CD8-positive, alpha-beta T cell (primary cell): ENCODE measurements at regions of chr4 and their contacts with region 1.

Region 1: DNA sequence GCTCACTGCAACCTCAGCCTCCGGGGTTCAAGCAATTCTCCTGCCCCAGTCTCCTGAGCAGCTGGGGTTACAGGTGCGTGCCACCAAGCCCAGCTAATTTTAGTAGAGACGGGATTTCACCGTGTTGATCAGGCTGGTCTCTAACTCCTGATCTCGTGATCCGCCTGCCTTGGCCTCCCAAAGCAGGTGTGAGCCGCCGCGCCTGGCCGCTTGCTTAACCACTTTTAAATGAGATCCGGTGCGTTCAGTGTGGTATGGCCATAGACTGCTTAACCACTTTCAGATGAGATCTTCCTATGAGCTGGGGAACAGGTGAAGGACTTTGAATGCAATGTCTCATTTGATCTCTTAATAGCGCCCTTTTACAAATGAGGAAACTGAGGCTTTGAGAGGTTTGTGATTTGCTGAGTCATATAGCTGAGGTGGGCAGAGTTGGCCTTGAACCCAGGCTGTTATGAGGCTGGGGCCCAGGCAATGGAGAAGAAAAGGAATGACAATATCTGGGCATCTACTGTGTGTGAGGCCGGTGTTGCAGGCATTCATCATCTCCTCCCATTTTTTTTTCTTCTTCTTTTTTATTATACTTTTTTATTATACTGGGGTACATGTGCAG is 41.9 kb upstream of the NSG1 start:
- DNase-seq: peak in 1 of 9 experiments; percentile 11
- ATAC-seq: no peak
- H3K4me3 ChIP-seq: no peak overlapping the region
- H3K4me3 Mint-ChIP-seq: no peak overlapping the region
- H3K27ac ChIP-seq: no peak overlapping the region
- H3K27ac Mint-ChIP-seq: no peak overlapping the region
- H3K4me1 ChIP-seq: peaks cover 38% of the 10 kb centered on the region
- H3K4me1 Mint-ChIP-seq: peaks cover 61% of the 10 kb centered on the region
- H3K27me3 ChIP-seq: no peaks in the 10 kb centered on the region
- H3K27me3 Mint-ChIP-seq: no peaks in the 10 kb centered on the region
- CTCF ChIP-seq: no peak

Region 2: DNA sequence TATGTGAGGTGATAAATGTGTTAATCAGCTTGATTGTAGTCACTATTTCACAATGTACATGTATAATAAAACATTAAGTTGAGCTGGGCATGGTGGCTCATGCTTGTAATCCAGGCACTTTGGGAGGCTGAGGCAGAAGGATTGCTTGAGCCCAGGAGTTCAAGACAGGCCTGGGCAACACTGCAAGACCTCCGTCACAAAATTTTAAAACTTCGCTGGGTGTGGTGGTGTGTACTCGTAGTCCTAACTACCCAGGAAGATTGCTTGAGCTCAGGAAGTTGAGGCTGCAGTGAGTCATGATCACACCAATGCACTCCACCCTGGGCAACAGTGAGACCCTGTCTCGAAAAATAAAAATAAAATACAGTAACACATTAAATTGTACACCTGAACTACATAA is 75.2 kb before region 1 on chr4:
- CTCF ChIA-PET with region 1: interaction called, 3 read pairs
- POLR2A ChIA-PET with region 1: interaction called, 10 read pairs
- intact Hi-C with region 1: no loop called
- DNase-seq: peak in 6 of 9 experiments; percentile 39 to 81 (median 70)
- ATAC-seq: peak; percentile 77
- H3K4me3 ChIP-seq: no peak overlapping the region
- H3K4me3 Mint-ChIP-seq: peak overlapping the region; percentile 77
- H3K27ac ChIP-seq: peak overlapping the region; percentile 81 to 90
- H3K27ac Mint-ChIP-seq: peak overlapping the region; percentile 95
- H3K4me1 ChIP-seq: peaks cover 22% of the 10 kb centered on the region
- H3K4me1 Mint-ChIP-seq: peaks cover 52% of the 10 kb centered on the region
- H3K27me3 ChIP-seq: no peaks in the 10 kb centered on the region
- H3K27me3 Mint-ChIP-seq: no peaks in the 10 kb centered on the region
- CTCF ChIP-seq: no peak

Region 3: GRCh38 chr4:4311193-4311592 is 33.8 kb before region 1 on chr4:
- CTCF ChIA-PET with region 1: no interaction called
- POLR2A ChIA-PET with region 1: no interaction called
- intact Hi-C with region 1: no loop called
- DNase-seq: no peak
- ATAC-seq: no peak
- H3K4me3 ChIP-seq: no peak overlapping the region
- H3K4me3 Mint-ChIP-seq: no peak overlapping the region
- H3K27ac ChIP-seq: no peak overlapping the region
- H3K27ac Mint-ChIP-seq: no peak overlapping the region
- H3K4me1 ChIP-seq: no peaks in the 10 kb centered on the region
- H3K4me1 Mint-ChIP-seq: peaks cover 2% of the 10 kb centered on the region
- H3K27me3 ChIP-seq: no peaks in the 10 kb centered on the region
- H3K27me3 Mint-ChIP-seq: no peaks in the 10 kb centered on the region
- CTCF ChIP-seq: no peak

Region 4: GRCh38 chr4:4334798-4335520 is 10.1 kb before region 1 on chr4:
- CTCF ChIA-PET with region 1: interaction called, 14 read pairs
- POLR2A ChIA-PET with region 1: interaction called, 6 read pairs
- intact Hi-C with region 1: loop called in 1 of 2 experiments (anchors 1 kb)
- DNase-seq: peak; percentile 55 to 88 (median 77)
- ATAC-seq: peak; percentile 100
- H3K4me3 ChIP-seq: no peak overlapping the region
- H3K4me3 Mint-ChIP-seq: peak overlapping the region; percentile 43
- H3K27ac ChIP-seq: no peak overlapping the region
- H3K27ac Mint-ChIP-seq: peak overlapping the region; percentile 49
- H3K4me1 ChIP-seq: peaks cover 6% of the 10 kb centered on the region
- H3K4me1 Mint-ChIP-seq: peaks cover 17% of the 10 kb centered on the region
- H3K27me3 ChIP-seq: no peaks in the 10 kb centered on the region
- H3K27me3 Mint-ChIP-seq: no peaks in the 10 kb centered on the region
- CTCF ChIP-seq: peak; percentile 65

Region 5: GRCh38 chr4:4376074-4376473 is 31.1 kb after region 1 on chr4:
- CTCF ChIA-PET with region 1: no interaction called
- POLR2A ChIA-PET with region 1: no interaction called
- intact Hi-C with region 1: no loop called
- DNase-seq: no peak
- ATAC-seq: no peak
- H3K4me3 ChIP-seq: no peak overlapping the region
- H3K4me3 Mint-ChIP-seq: no peak overlapping the region
- H3K27ac ChIP-seq: no peak overlapping the region
- H3K27ac Mint-ChIP-seq: no peak overlapping the region
- H3K4me1 ChIP-seq: no peaks in the 10 kb centered on the region
- H3K4me1 Mint-ChIP-seq: no peaks in the 10 kb centered on the region
- H3K27me3 ChIP-seq: no peaks in the 10 kb centered on the region
- H3K27me3 Mint-ChIP-seq: peaks cover 2% of the 10 kb centered on the region
- CTCF ChIP-seq: no peak

Region 6: GRCh38 chr4:4386736-4387392 is 41.8 kb after region 1 on chr4 and contains the start of gene NSG1:
- CTCF ChIA-PET with region 1: interaction called, 3 read pairs
- POLR2A ChIA-PET with region 1: interaction called, 25 read pairs
- intact Hi-C with region 1: loop called in 1 of 2 experiments (anchors 1 kb)
- DNase-seq: peak in 8 of 9 experiments; percentile 29 to 72 (median 53)
- ATAC-seq: peak; percentile 66
- H3K4me3 ChIP-seq: peak within 1 kb of the TSS; percentile 58 to 76
- H3K4me3 Mint-ChIP-seq: peak within 1 kb of the TSS; percentile 93
- H3K27ac ChIP-seq: peak within 1 kb of the TSS; percentile 30 to 35
- H3K27ac Mint-ChIP-seq: peak within 1 kb of the TSS; percentile 82
- H3K4me1 ChIP-seq: peaks cover 14% of the 10 kb centered on the region
- H3K4me1 Mint-ChIP-seq: peaks cover 25% of the 10 kb centered on the region
- H3K27me3 ChIP-seq: no peaks in the 10 kb centered on the region
- H3K27me3 Mint-ChIP-seq: peaks cover 7% of the 10 kb centered on the region
- CTCF ChIP-seq: no peak
- total RNA-seq, gene NSG1: 14.2 to 15.8 TPM